ENCODE measurements at regions of chr6 and their contacts with region 1.

Region 1: GRCh38 chr6:73653571-73654424 is at the start of gene SLC17A5:
- DNase-seq: peak; percentile 89 to 96
- ATAC-seq: peak; percentile 93 to 94
- H3K4me3 ChIP-seq: peak within 1 kb of the TSS; percentile 83 to 99 (median 97)
- H3K27ac ChIP-seq: peak within 1 kb of the TSS; percentile 96 to 99 (median 98)
- H3K4me1 ChIP-seq: peaks cover 18% of the 10 kb centered on the region in 2 donors
- H3K27me3 ChIP-seq: no peaks in the 10 kb centered on the region
- CTCF ChIP-seq: peak in 2 of 5 experiments; percentile 6 to 7
- POLR2A ChIP-seq: peak; percentile 64 to 76
- total RNA-seq, gene SLC17A5: 2.6 to 11.5 (median 5.4) TPM

Region 2: DNA sequence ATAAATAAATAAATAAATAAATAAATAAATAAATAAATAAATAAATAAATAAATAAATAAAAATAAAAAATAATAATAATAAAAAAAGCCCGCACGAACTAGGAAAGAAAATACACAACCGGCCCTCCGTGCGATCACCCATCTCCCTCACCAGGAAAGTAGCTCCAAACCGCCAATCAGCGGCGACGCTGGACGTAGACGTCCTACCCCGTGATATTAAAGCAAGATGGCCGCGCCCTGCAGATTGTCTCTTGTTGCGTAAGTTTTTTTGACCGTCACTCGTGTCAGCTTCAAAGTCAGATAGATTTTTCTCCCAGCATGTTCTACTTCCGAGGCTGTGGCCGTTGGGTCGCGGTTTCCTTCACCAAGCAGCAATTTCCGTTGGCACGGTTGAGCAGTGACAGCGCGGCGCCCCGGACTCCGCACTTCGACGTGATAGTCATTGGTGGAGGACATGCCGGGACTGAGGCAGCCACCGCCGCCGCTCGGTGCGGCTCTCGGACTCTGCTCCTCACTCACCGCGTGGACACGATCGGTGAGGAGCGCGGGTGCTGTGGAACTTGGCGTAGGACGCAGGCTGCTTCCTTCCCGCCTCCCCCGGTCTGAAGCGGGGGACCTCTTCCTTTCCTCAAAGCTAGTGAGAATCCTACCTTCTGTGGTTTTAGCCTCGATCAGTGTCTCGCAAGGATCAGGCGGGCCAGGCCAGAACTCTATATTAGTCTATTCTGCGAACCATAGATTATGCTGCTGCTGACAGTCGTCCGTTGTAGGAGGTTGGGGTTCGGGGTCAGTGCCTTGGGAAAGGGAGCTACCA is 192.1 kb before region 1 on chr6 and contains the start of gene MTO1:
- in situ Hi-C with region 1: no loop called
- intact Hi-C with region 1: loop called (anchors 5 kb)
- DNase-seq: peak; percentile 82 to 89
- ATAC-seq: peak; percentile 99
- H3K4me3 ChIP-seq: peak within 1 kb of the TSS; percentile 80 to 100 (median 92)
- H3K27ac ChIP-seq: peak within 1 kb of the TSS; percentile 89 to 99 (median 96)
- H3K4me1 ChIP-seq: peaks cover 6 to 12% of the 10 kb centered on the region in 2 donors
- H3K27me3 ChIP-seq: no peaks in the 10 kb centered on the region
- CTCF ChIP-seq: no peak
- POLR2A ChIP-seq: peak; percentile 40 to 46
- total RNA-seq, gene MTO1: 16.4 to 43.4 (median 21.9) TPM

Region 3: DNA sequence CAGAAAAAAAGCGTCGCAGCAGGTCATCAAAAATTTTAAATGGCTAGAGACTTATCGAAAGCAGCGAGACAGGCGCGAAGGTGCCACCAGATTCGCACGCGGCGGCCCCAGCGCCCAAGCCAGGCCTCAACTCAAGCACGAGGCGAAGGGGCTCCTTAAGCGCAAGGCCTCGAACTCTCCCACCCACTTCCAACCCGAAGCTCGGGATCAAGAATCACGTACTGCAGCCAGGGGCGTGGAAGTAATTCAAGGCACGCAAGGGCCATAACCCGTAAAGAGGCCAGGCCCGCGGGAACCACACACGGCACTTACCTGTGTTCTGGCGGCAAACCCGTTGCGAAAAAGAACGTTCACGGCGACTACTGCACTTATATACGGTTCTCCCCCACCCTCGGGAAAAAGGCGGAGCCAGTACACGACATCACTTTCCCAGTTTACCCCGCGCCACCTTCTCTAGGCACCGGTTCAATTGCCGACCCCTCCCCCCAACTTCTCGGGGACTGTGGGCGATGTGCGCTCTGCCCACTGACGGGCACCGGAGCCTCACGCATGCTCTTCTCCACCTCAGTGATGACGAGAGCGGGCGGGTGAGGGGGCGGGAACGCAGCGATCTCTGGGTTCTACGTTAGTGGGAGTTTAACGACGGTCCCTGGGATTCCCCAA is 133.0 kb before region 1 on chr6 and contains the start of gene EEF1A1:
- in situ Hi-C with region 1: no loop called
- intact Hi-C with region 1: loop called (anchors 2 kb)
- DNase-seq: peak; percentile 91 to 94
- ATAC-seq: peak; percentile 82
- H3K4me3 ChIP-seq: peak within 1 kb of the TSS; percentile 60 to 83 (median 68)
- H3K27ac ChIP-seq: peak within 1 kb of the TSS; percentile 83 to 92 (median 90)
- H3K4me1 ChIP-seq: peaks cover 9 to 13% of the 10 kb centered on the region in 2 donors
- H3K27me3 ChIP-seq: peaks cover 42 to 45% (median 44%) of the 10 kb centered on the region in 3 donors
- CTCF ChIP-seq: no peak
- POLR2A ChIP-seq: peak; percentile 83 to 90
- total RNA-seq, gene EEF1A1: 846 to 1,271 (median 1,198) TPM

Region 4: GRCh38 chr6:75418233-75418632 is 1764.4 kb after region 1 on chr6:
- in situ Hi-C with region 1: no loop called
- intact Hi-C with region 1: loop called (anchors 5 kb)
- DNase-seq: no peak
- ATAC-seq: peak in 1 of 2 donors; percentile 14
- H3K4me3 ChIP-seq: no peak overlapping the region
- H3K27ac ChIP-seq: peak overlapping the region; percentile 65 to 76 (median 72)
- H3K4me1 ChIP-seq: peaks cover 90 to 96% of the 10 kb centered on the region in 2 donors
- H3K27me3 ChIP-seq: no peaks in the 10 kb centered on the region
- CTCF ChIP-seq: no peak
- POLR2A ChIP-seq: no peak

Region 5: DNA sequence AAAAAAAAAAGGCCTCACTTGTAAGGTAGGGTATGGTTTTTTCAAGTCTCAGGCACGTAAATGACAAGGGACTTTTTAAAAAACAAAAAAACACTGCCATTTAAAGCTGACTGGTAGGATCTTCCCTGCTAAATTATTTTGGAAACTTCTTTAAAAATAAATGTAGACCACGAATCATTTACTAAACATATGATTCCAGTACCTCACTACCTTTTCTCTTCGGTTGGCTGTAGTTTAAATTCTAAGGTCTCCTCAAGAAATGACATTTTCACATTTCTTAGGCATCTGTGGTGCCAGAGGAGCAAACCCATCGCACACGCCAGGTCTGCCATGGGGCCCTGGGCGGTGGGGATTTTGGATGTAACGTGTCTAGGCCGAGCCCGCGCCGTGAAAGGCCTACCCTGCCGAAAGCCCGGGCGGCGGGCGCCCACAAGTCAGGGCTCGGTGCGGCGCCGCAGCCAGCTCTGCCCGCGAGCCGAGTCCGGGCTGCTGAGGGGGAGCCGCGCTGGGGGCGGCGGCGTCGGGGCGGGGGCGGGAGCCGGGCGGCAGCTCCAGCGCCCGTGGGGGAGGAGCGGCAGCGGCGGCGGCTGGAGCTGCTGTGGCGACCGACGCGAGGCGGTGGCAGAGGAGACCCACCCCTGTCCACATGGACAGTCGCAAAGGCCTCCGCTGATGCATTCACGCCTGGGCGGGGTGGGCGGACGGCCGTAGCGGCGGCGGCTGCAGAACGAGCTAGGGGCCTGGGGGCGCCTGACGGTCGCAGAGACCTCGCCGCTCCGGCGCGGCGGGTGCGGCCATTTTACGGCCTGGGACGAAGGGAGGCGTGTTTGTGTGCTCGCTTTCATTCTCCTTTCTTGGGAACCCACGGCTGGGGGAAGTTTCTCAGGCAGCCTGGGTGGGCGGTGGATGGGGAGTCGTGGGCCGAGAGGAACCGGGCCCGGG is 1947.8 kb after region 1 on chr6 and contains the start of gene SENP6:
- in situ Hi-C with region 1: no loop called
- intact Hi-C with region 1: loop called (anchors 5 kb)
- DNase-seq: peak; percentile 66 to 78
- ATAC-seq: peak; percentile 88 to 90
- H3K4me3 ChIP-seq: peak within 1 kb of the TSS; percentile 84 to 96 (median 88)
- H3K27ac ChIP-seq: peak within 1 kb of the TSS; percentile 97 to 98 (median 98)
- H3K4me1 ChIP-seq: peaks cover 19 to 32% of the 10 kb centered on the region in 2 donors
- H3K27me3 ChIP-seq: no peaks in the 10 kb centered on the region
- CTCF ChIP-seq: peak in 1 of 5 experiments; percentile 5
- POLR2A ChIP-seq: peak; percentile 85 to 91
- total RNA-seq, gene SENP6: 50.3 to 67.9 (median 57.6) TPM